ENCODE measurements at regions of chr19 and their contacts with region 1.

Region 1: GRCh38 chr19:29941828-29942403 is at the start of gene URI1:
- DNase-seq: peak; percentile 99
- H3K4me3 Mint-ChIP-seq: peak within 1 kb of the TSS; percentile 88
- H3K27ac Mint-ChIP-seq: peak within 1 kb of the TSS; percentile 91
- H3K4me1 Mint-ChIP-seq: peaks cover 27% of the 10 kb centered on the region
- H3K27me3 Mint-ChIP-seq: peaks cover 3% of the 10 kb centered on the region
- total RNA-seq, gene URI1: 60.0 and 64.3 TPM in 2 replicates

Region 2: GRCh38 chr19:29811125-29812079 is 130.5 kb before region 1 on chr19 and contains the start of gene CCNE1:
- intact Hi-C with region 1: loop called (anchors 1 kb)
- DNase-seq: peak; percentile 98
- H3K4me3 Mint-ChIP-seq: peak within 1 kb of the TSS; percentile 93
- H3K27ac Mint-ChIP-seq: peak within 1 kb of the TSS; percentile 93
- H3K4me1 Mint-ChIP-seq: peaks cover 27% of the 10 kb centered on the region
- H3K27me3 Mint-ChIP-seq: no peaks in the 10 kb centered on the region
- total RNA-seq, gene CCNE1: 54.5 and 55.8 TPM in 2 replicates

Region 3: DNA sequence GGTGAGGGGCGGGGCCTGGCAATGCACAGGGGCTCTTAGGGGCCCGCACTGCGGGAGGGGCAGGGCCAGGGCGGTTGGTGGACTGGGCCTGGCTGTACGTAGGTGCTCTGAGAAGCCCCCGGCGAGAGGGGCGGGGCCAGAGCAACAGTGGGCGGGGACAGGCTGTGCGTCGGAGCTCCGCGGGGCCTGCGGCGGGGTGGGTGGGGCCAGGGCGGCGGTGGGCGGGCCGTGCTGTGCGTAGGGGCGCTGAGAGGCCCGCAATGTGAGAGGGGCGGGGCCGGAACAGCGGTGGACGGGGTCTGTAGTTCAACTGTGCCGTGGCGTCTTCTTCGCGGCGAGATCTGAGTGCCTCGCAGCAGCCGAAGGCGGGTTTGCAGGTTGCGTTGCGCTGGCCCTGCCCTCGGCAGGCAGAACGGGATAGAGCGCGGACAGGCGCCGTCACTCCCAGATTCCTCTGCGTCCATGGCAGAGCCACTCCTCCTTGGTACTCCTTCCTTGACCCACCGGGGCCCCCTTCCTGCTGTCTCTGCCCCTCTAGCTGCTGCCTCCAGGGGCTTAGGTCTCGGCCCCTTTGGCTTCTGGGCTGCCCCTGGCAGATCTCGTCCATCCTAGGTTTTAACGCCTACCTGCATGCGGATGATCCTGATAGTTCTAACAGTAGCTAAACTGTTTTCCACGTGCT is 96.9 kb before region 1 on chr19:
- intact Hi-C with region 1: loop called (anchors 2 kb)
- DNase-seq: peak; percentile 98
- H3K4me3 Mint-ChIP-seq: peak overlapping the region; percentile 87
- H3K27ac Mint-ChIP-seq: peak overlapping the region; percentile 86
- H3K4me1 Mint-ChIP-seq: peaks cover 26% of the 10 kb centered on the region
- H3K27me3 Mint-ChIP-seq: no peaks in the 10 kb centered on the region

Region 4: DNA sequence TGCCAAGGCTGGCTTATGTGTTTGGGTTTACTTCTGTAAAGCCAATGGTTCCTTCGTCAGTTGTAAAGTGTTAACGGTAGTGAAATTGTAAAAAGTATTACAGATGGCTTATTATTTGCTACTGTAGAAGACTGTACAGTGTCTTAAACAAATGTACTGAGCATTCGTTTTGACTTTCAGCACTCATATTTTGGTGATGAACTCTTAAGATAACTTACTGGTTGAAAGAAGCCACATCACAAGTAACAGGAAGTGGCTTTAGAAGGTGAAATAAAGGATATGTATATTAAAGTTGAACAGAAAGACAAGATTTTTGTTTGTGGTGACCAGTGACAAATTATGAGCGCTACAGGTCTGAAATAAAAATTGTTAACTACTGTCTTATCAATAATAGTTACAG is 64.3 kb after region 1 on chr19:
- intact Hi-C with region 1: loop called (anchors 2 kb)
- DNase-seq: no peak
- H3K4me3 Mint-ChIP-seq: peak overlapping the region; percentile 70
- H3K27ac Mint-ChIP-seq: peak overlapping the region; percentile 68
- H3K4me1 Mint-ChIP-seq: peaks cover 37% of the 10 kb centered on the region
- H3K27me3 Mint-ChIP-seq: no peaks in the 10 kb centered on the region

Measured in activated CD4-positive, alpha-beta T cell treated with anti-CD3 and anti-CD28 coated beads, Interleukin-2, amount 10 ng/mL, durations not matched to agents 24 days and 14 days (primary cell).